Mammary epithelial cell (primary cell): ENCODE measurements at regions of chr1 and their contacts with region 1.

Region 1: GRCh38 chr1:39538588-39539465 is 37.8 kb downstream of the PABPC4 start:
- DNase-seq: peak; percentile 45
- H3K4me3 ChIP-seq: no peak overlapping the region
- H3K27ac ChIP-seq: no peak overlapping the region
- H3K4me1 ChIP-seq: no peaks in the 10 kb centered on the region
- H3K27me3 ChIP-seq: no peaks in the 10 kb centered on the region
- CTCF ChIP-seq: peak; percentile 88

Region 2: GRCh38 chr1:39441797-39442196 is 97.0 kb before region 1 on chr1:
- CTCF ChIA-PET with region 1: no interaction called
- dilution Hi-C with region 1: no loop called
- in situ Hi-C with region 1: loop called in 1 of 2 experiments (anchors 5 kb)
- intact Hi-C with region 1: no loop called
- DNase-seq: no peak
- H3K4me3 ChIP-seq: no peak overlapping the region
- H3K27ac ChIP-seq: no peak overlapping the region
- H3K4me1 ChIP-seq: no peaks in the 10 kb centered on the region
- H3K27me3 ChIP-seq: no peaks in the 10 kb centered on the region
- CTCF ChIP-seq: no peak

Region 3: GRCh38 chr1:39478126-39478915 is 60.5 kb before region 1 on chr1:
- CTCF ChIA-PET with region 1: interaction called, 3 read pairs
- dilution Hi-C with region 1: no loop called
- in situ Hi-C with region 1: no loop called
- intact Hi-C with region 1: loop called (anchors 5 kb)
- DNase-seq: no peak
- H3K4me3 ChIP-seq: no peak overlapping the region
- H3K27ac ChIP-seq: no peak overlapping the region
- H3K4me1 ChIP-seq: peaks cover 4% of the 10 kb centered on the region
- H3K27me3 ChIP-seq: no peaks in the 10 kb centered on the region
- CTCF ChIP-seq: no peak

Region 4: DNA sequence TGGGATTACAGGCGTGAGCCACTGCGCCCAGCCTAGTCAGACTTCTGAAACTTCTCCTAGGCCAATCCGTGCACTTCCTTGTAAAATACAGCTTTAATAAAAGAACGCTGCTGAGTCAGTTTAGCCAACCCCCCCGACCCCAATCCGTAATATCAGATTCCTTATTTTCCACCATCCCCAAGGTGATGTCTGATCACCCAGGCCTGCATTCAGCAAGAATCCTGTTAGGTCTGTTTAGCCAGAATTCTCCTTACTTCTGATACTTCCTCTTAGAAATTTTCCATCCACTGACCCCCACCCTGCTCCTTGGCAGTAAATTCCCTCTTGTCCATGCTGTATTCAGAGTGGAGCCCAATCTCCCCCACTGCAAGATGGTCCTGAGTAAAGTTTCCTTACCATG is 49.3 kb after region 1 on chr1:
- CTCF ChIA-PET with region 1: no interaction called
- dilution Hi-C with region 1: no loop called
- in situ Hi-C with region 1: no loop called
- intact Hi-C with region 1: no loop called
- DNase-seq: no peak
- H3K4me3 ChIP-seq: no peak overlapping the region
- H3K27ac ChIP-seq: no peak overlapping the region
- H3K4me1 ChIP-seq: no peaks in the 10 kb centered on the region
- H3K27me3 ChIP-seq: no peaks in the 10 kb centered on the region
- CTCF ChIP-seq: no peak